Heart left ventricle (tissue), 16 donors: ENCODE measurements at regions of chr10 and their contacts with region 1.

Region 1: GRCh38 chr10:29746080-29746797 is 111.5 kb upstream of the SVIL start:
- DNase-seq: no peak
- ATAC-seq: peak in 3 of 4 donors; percentile 29 to 51 (median 33)
- H3K4me3 ChIP-seq: no peak overlapping the region
- H3K27ac ChIP-seq: peak overlapping the region in 2 of 12 donors; percentile 17 to 57
- H3K4me1 ChIP-seq: peaks cover 0 to 18% (median 3%) of the 10 kb centered on the region in 12 donors
- H3K27me3 ChIP-seq: no peaks in the 10 kb centered on the region
- CTCF ChIP-seq: no peak
- POLR2A ChIP-seq: no peak

Region 2: GRCh38 chr10:29946953-29947700 is 200.9 kb after region 1 on chr10:
- intact Hi-C with region 1: loop called in 1 of 10 experiments (anchors 10 kb)
- DNase-seq: peak in 4 of 5 donors; percentile 37 to 65 (median 43)
- ATAC-seq: peak; percentile 91 to 96 (median 94)
- H3K4me3 ChIP-seq: peak overlapping the region in 2 of 12 donors; percentile 4 to 17
- H3K27ac ChIP-seq: peak overlapping the region; percentile 66 to 93 (median 82)
- H3K4me1 ChIP-seq: peaks cover 0 to 31% (median 12%) of the 10 kb centered on the region in 12 donors
- H3K27me3 ChIP-seq: no peaks in the 10 kb centered on the region
- CTCF ChIP-seq: no peak
- POLR2A ChIP-seq: peak in 1 of 2 donors; percentile 34